Colonic mucosa (tissue), 4 donors: ENCODE measurements at regions of chr7 and their contacts with region 1.

Region 1: GRCh38 chr7:21945454-21946227 is at the start of gene CDCA7L:
- DNase-seq: peak; percentile 86
- H3K4me3 ChIP-seq: peak within 1 kb of the TSS; percentile 48
- H3K27ac ChIP-seq: peak within 1 kb of the TSS; percentile 80
- H3K4me1 ChIP-seq: peaks cover 5% of the 10 kb centered on the region
- H3K27me3 ChIP-seq: no peaks in the 10 kb centered on the region
- CTCF ChIP-seq: no peak
- total RNA-seq, gene CDCA7L: 19.8 to 35.8 TPM

Region 2: GRCh38 chr7:20798081-20798693 is 1147.5 kb before region 1 on chr7:
- intact Hi-C with region 1: loop called (anchors 10 kb)
- DNase-seq: peak; percentile 76
- H3K4me3 ChIP-seq: peak overlapping the region; percentile 43
- H3K27ac ChIP-seq: no peak overlapping the region
- H3K4me1 ChIP-seq: peaks cover 9% of the 10 kb centered on the region
- H3K27me3 ChIP-seq: peaks cover 64% of the 10 kb centered on the region
- CTCF ChIP-seq: no peak